Sciatic nerve (tissue), 2 donors: ENCODE measurements at regions of chr9 and their contacts with region 1.

Region 1: DNA sequence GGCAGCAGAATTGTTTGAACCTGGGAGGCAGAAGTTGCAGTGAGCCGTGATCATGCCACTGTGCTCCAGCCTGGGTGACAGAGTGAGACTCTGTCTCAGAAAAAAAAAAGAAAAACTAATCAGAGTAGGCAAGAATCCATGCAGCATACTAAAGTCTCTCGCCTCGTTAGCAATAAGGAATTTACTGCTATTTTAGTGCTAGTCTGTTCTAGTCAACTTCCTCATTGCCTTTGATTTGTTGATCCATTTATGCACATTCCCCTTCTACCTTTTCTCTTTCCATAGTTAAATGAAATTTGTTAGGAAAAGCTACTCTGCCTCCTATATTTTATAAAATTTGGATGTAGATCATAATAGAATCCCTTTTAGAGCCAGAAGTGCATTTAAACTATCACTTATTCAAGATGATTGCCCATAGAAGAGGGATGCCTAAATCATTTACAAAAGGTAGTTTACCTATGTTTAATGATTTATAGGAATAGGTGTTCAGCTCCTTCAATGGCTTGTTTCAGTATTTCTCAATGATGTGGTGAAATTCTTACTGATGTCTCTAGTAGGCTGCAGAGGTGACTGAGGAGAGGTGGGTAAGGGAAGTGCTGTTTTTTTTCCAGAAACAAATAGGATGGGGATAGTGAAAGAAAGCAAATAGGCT is 1.9 kb downstream of the LRRC19 start:
- DNase-seq: no peak
- ATAC-seq: no peak

Region 2: GRCh38 chr9:26760675-26761074 is 242.9 kb before region 1 on chr9:
- intact Hi-C with region 1: no loop called
- DNase-seq: no peak
- ATAC-seq: no peak

Region 3: GRCh38 chr9:26955921-26956859 is 47.4 kb before region 1 on chr9 and contains the start of gene IFT74:
- intact Hi-C with region 1: loop called (anchors 2 kb)
- DNase-seq: peak; percentile 99
- ATAC-seq: peak; percentile 100
- total RNA-seq, gene IFT74: 22.6 TPM

Region 4: DNA sequence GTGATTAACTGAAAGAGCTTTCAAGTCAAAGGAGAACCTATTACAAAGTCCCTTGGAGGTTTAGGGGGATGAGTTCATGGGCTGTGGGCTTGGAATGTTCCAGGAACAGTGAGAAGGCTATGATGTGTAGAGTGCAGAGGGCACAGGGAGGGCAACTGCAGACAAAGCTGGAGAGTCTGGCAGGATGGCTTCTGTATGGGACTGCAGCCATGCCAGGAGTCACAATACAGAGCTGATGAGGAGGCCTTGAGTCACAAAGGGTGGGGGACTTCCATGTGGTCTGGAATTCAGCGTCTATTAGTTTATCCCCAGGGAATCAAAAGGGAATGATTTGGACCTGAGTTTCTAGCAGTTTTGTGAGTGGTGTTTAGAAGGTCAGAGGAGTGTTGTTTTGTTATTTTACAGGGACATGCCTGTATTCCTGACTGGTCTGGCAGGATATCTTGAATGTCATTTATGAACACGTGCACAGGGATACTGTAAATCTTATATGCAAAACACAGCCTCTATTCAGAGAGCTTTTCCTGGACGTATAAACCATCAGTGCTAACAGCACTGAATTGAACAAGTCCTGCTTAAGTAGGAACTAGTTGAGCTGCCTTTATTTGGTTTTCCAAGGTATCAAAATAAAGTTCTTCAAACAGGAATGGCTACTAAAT is 91.2 kb after region 1 on chr9:
- intact Hi-C with region 1: no loop called
- DNase-seq: no peak
- ATAC-seq: no peak